PC-9 (cell line): ENCODE measurements at regions of chr12 and their contacts with region 1.

Region 1: DNA sequence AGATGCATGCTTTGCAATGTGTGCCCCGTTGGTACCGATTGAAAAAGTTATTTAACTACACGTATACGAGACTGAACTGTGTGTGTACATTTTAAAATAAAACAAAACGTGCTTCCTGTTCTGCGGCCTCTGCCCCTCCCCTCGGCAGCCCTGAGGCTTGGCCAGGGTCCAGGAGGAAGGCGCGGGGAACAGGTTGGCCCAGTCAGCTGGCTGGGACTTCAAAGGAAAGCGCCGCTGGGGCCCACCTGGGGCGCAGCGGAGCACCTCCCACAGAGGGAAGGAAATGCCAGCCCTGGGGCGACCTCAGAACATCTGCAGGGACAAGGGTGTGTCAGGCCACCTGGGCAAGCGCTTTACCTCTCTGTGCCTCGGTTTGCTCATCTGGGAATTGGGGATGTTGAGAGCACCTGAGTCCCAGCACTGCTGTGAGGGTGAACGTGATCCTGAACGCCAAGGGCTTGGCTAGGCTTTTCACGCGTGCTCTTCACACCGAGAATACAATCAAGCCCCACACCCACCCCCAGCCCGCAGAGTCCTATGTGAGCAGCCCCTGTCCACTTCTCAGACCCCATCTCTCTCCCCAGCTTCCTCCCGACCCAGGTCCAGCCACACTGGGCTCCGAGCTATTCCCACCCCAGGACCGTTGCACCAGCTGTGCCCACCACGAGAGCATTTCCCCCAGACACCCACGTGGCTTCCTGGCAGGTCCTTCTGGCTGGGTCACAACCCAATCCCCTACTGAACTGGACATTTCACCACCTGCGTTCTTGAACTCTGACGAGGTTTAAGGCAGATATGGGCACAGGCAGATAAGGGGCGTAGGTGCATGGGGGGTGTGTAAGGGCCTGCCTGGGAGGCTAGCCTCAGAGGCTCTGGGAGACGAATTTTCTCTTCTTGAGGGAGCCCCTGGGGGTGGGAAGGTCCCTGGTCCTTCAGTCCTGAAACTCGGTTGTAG is 41.9 kb upstream of the NCOR2 start:
- DNase-seq: peak; percentile 86 to 97
- H3K4me3 ChIP-seq: no peak overlapping the region; the same call in 1 of the 2 replicates
- H3K27ac ChIP-seq: peak overlapping the region; percentile 76
- H3K4me1 ChIP-seq: peaks cover 41% of the 10 kb centered on the region
- H3K27me3 ChIP-seq: no peaks in the 10 kb centered on the region
- CTCF ChIP-seq: no peak

Region 2: DNA sequence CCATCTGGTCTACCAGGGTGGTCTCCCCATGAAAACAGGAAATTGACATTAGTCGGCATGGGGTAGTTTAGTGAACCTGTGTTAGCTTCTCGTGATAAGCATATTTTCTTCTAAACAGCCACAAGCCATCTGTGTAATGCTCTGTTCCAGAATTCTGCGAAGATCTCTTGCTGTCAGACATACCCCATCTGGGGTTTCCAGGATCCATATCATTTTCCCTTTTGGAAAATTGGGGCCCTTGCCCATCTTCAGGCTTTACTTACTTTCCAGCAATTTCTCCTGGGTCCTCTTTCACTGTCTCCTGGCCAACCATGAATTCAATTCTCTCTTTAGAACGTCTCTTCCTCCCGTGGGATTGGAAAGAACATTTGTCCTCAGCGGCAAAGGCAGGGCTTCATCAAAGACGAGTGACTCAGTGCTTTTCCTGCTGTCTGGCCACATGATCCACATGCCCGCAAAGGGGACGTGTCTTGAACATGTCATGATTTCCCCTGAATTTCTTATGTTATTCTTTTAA is 20.5 kb before region 1 on chr12:
- CTCF ChIA-PET with region 1: no interaction called
- POLR2A ChIA-PET with region 1: interaction called, 12 read pairs
- intact Hi-C with region 1: no loop called
- DNase-seq: no peak
- H3K4me3 ChIP-seq: no peak overlapping the region
- H3K27ac ChIP-seq: no peak overlapping the region
- H3K4me1 ChIP-seq: peaks cover 22% of the 10 kb centered on the region
- H3K27me3 ChIP-seq: no peaks in the 10 kb centered on the region
- CTCF ChIP-seq: no peak